PC-9 (cell line): ENCODE measurements at regions of chrX and their contacts with region 1.

Region 1: GRCh38 chrX:152821145-152821765 is 9.3 kb downstream of the CETN2 start:
- DNase-seq: peak; percentile 53 to 55
- H3K4me3 ChIP-seq: no peak overlapping the region
- H3K27ac ChIP-seq: no peak overlapping the region
- H3K4me1 ChIP-seq: no peaks in the 10 kb centered on the region
- H3K27me3 ChIP-seq: no peaks in the 10 kb centered on the region
- CTCF ChIP-seq: peak; percentile 97

Region 2: DNA sequence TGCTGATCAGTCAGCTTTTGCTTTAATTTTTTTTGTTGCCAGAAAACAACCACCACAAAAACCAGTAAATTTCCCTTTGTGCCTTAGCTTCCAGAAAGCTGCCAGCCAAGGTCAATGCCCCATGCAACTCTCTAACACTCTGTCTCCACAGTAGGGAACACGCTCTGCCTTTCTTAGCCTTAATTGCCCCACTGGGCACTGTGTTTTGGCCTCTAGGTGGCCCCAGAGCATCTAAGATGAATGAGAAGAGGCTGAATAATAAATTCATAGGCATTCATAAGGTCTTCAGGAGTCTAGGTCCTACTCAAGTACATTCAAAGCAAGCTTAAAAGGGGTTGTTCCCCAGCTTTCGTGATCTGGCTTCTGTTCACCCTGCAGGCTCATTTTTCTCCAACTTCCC is 1315.5 kb before region 1 on chrX:
- CTCF ChIA-PET with region 1: no interaction called
- POLR2A ChIA-PET with region 1: no interaction called
- intact Hi-C with region 1: loop called (anchors 10 kb)
- DNase-seq: peak in 1 of 2 experiments; percentile 22
- H3K4me3 ChIP-seq: no peak overlapping the region
- H3K27ac ChIP-seq: no peak overlapping the region
- H3K4me1 ChIP-seq: no peaks in the 10 kb centered on the region
- H3K27me3 ChIP-seq: peaks cover 36% of the 10 kb centered on the region
- CTCF ChIP-seq: peak; percentile 74

Region 3: GRCh38 chrX:152614791-152615190 is 206.5 kb before region 1 on chrX:
- CTCF ChIA-PET with region 1: no interaction called
- POLR2A ChIA-PET with region 1: no interaction called
- intact Hi-C with region 1: no loop called
- DNase-seq: peak in 1 of 2 experiments; percentile 26
- H3K4me3 ChIP-seq: no peak overlapping the region
- H3K27ac ChIP-seq: no peak overlapping the region
- H3K4me1 ChIP-seq: no peaks in the 10 kb centered on the region
- H3K27me3 ChIP-seq: no peaks in the 10 kb centered on the region
- CTCF ChIP-seq: no peak

Region 4: GRCh38 chrX:152641996-152642395 is 179.3 kb before region 1 on chrX:
- CTCF ChIA-PET with region 1: interaction called, 3 read pairs
- POLR2A ChIA-PET with region 1: no interaction called
- intact Hi-C with region 1: loop called (anchors 1 kb)
- DNase-seq: peak; percentile 5 to 35
- H3K4me3 ChIP-seq: no peak overlapping the region
- H3K27ac ChIP-seq: no peak overlapping the region
- H3K4me1 ChIP-seq: no peaks in the 10 kb centered on the region
- H3K27me3 ChIP-seq: no peaks in the 10 kb centered on the region
- CTCF ChIP-seq: peak; percentile 46; the same call in 1 of the 2 replicates

Region 5: DNA sequence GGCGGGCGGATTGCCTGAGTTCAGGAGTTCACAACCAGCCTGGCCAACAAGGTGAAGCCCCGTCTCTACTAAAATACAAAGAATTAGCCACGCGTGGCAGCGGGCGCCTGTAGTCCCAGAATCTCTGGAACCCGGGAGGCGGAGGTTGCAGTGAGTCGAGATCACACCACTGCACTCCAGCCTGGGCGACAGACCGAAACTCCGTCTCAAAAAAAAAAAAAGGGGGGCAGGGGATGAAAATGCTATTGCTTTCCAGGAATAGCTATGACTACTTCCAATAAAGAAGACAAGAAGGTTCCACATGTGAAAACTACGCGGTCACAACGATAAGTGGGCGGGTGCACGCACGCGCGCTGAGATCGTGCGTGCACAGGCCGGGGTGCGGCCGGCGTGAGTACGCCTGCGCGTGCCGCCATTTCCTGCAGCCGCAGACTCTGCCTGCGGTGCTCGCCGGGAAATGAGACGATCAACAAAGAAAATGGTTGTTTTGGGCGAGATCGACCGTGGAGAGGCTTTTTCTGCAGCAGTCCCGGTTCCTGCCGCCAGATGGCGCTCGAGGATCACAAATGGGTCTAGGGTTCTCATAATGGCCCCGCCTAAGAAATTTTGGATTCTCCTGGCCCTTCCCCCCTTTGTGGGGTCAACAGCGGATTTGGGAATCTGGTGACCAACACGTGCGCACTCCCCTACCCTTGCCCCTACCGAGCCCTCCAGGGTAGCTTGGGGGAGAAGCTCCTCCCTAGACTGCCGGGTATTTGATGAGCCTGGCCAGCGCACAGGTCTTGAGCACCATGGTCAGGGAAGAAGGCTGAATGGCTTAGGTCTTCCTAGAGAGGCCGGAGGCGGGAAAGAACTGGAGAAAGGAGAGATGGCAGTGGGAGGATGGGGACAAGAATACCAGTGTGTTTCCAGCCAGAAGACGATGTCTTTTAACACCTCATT is 137.5 kb after region 1 on chrX:
- CTCF ChIA-PET with region 1: interaction called, 14 read pairs
- POLR2A ChIA-PET with region 1: no interaction called
- intact Hi-C with region 1: no loop called
- DNase-seq: peak; percentile 69 to 83
- H3K4me3 ChIP-seq: peak overlapping the region; percentile 13; the same call in 1 of the 2 replicates
- H3K27ac ChIP-seq: no peak overlapping the region
- H3K4me1 ChIP-seq: peaks cover 9% of the 10 kb centered on the region; the same call in 1 of the 2 replicates
- H3K27me3 ChIP-seq: no peaks in the 10 kb centered on the region
- CTCF ChIP-seq: peak; percentile 98

Region 6: DNA sequence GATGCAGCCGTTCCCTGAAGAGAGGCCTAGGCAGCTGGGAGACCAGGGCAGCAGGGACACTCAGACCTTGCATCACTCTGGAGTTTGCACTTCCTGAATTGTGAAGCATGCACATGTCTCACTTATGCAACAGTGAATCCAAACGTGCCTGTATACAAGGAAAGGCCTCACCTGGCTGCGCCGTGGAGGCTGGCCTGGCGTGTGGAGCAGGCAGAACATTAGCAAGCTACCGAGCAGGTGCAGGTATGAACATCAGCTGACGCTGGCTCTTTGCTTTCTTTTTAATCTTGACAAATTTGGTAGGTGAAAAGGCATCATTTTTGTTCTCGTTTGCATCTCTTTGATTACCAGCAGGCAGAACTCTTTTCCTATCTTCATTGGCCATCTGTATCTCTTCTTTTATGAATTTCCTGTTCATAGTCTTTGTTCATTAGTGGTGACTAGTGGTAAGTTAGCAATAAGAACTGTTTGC is 1235.6 kb after region 1 on chrX:
- CTCF ChIA-PET with region 1: no interaction called
- POLR2A ChIA-PET with region 1: no interaction called
- intact Hi-C with region 1: no loop called
- DNase-seq: no peak
- H3K4me3 ChIP-seq: no peak overlapping the region
- H3K27ac ChIP-seq: 0 out of 2 replicates have a peak overlapping the region, but pooled peaks have one; percentile 6
- H3K4me1 ChIP-seq: 0 out of 2 replicates have a peak, but pooled peaks cover 5% of the 10 kb centered on the region
- H3K27me3 ChIP-seq: no peaks in the 10 kb centered on the region
- CTCF ChIP-seq: no peak